Ovary (tissue), 10 donors: ENCODE measurements at regions of chr5 and their contacts with region 1.

Region 1: GRCh38 chr5:33721491-33722200 is 170.1 kb downstream of the ADAMTS12 start:
- DNase-seq: no peak
- H3K4me3 ChIP-seq: no peak overlapping the region
- H3K27ac ChIP-seq: no peak overlapping the region
- H3K4me1 ChIP-seq: no peaks in the 10 kb centered on the region
- H3K27me3 ChIP-seq: no peaks in the 10 kb centered on the region
- CTCF ChIP-seq: no peak
- EP300 ChIP-seq: no peak
- POLR2A ChIP-seq: no peak

Region 2: DNA sequence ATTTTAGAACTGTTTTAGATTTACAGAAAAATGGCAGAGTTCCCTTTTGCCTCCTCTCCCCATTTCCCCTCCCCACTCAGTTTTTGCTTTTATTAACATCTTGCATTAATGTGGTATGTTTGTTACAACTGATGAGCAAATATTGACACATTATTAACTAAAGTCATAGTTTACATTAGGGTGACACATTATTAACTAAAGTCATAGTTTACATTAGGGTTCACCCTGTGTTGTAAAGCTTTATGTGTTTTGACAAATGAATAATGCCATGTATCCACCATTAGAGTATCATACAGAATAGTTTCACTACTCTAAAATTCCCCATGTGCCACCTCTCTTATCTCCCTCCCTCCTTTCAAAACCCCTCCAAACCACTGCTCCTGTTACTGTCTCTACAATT is 748.0 kb before region 1 on chr5:
- intact Hi-C with region 1: loop called in 1 of 4 experiments (anchors 5 kb)
- DNase-seq: no peak
- H3K4me3 ChIP-seq: no peak overlapping the region
- H3K27ac ChIP-seq: no peak overlapping the region
- H3K4me1 ChIP-seq: no peaks in the 10 kb centered on the region
- H3K27me3 ChIP-seq: no peaks in the 10 kb centered on the region
- CTCF ChIP-seq: no peak
- EP300 ChIP-seq: no peak
- POLR2A ChIP-seq: no peak